Psoas muscle (tissue), 8 donors: ENCODE measurements at regions of chr2 and their contacts with region 1.

Region 1: DNA sequence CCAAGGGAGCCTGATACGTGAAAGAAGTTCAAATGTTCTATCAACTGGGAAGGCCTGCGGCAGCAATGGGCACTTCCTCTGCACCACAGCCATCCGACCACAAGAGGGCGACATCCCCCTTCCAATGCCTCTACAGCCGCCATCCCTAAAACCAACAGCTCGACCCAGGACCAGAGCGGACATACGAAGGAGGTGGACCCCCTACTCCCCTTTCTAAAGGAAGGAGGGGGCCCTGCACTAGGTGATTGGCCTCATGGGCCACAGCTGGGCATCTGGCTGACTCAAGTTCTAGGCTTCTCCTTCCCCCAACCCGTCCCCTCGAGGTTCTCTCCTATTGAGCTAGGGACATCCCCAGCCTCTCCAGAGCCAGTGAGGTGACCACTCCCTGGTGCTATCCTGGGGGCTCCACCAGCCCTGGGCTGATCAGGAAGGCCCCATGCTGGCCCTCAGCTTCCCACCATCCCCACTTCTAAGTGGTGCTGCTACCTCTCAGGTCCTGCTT is 217.2 kb downstream of the TNS1 start:
- DNase-seq: peak; percentile 78 to 88
- ATAC-seq: peak; percentile 64 to 72 (median 69)
- H3K4me3 ChIP-seq: no peak overlapping the region
- H3K27ac ChIP-seq: no peak overlapping the region
- H3K4me1 ChIP-seq: peaks cover 16% of the 10 kb centered on the region
- H3K27me3 ChIP-seq: no peaks in the 10 kb centered on the region
- CTCF ChIP-seq: peak; percentile 95

Region 2: DNA sequence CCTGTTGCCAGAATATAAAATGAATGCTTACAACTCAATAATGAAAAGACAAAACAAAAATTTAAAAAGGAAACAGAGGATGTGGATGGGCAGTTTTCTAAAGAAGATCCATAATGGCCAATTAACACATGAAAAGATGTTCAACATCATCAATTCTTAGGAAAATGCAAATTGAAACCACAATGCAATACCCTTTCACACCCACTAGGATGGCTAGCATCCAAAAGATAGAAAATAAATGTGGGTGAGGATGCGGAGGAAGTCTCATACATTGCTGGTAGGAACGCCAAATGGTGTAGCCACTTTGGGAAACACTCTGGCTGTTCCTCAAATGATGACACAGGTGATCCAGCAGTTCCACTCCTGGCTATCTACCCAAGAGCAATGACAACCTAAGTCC is 86.7 kb after region 1 on chr2:
- intact Hi-C with region 1: loop called in 1 of 2 experiments (anchors 5 kb)
- DNase-seq: no peak
- ATAC-seq: no peak
- H3K4me3 ChIP-seq: no peak overlapping the region
- H3K27ac ChIP-seq: peak overlapping the region; percentile 75
- H3K4me1 ChIP-seq: peaks cover 46% of the 10 kb centered on the region
- H3K27me3 ChIP-seq: no peaks in the 10 kb centered on the region
- CTCF ChIP-seq: no peak

Region 3: GRCh38 chr2:217886720-217887309 is 101.2 kb after region 1 on chr2:
- intact Hi-C with region 1: loop called (anchors 1 to 2 kb)
- DNase-seq: peak; percentile 82 to 89
- ATAC-seq: peak; percentile 48 to 74 (median 63)
- H3K4me3 ChIP-seq: no peak overlapping the region
- H3K27ac ChIP-seq: no peak overlapping the region
- H3K4me1 ChIP-seq: peaks cover 28% of the 10 kb centered on the region
- H3K27me3 ChIP-seq: no peaks in the 10 kb centered on the region
- CTCF ChIP-seq: peak; percentile 85

Region 4: GRCh38 chr2:217988014-217988839 is 202.6 kb after region 1 on chr2:
- intact Hi-C with region 1: loop called (anchors 1 to 2 kb)
- DNase-seq: peak; percentile 84 to 93
- ATAC-seq: peak; percentile 81 to 87 (median 84)
- H3K4me3 ChIP-seq: peak overlapping the region; percentile 38
- H3K27ac ChIP-seq: peak overlapping the region; percentile 73
- H3K4me1 ChIP-seq: peaks cover 17% of the 10 kb centered on the region
- H3K27me3 ChIP-seq: no peaks in the 10 kb centered on the region
- CTCF ChIP-seq: peak; percentile 89

Region 5: GRCh38 chr2:217993817-217994463 is 208.3 kb after region 1 on chr2:
- intact Hi-C with region 1: loop called (anchors 1 to 2 kb)
- DNase-seq: peak; percentile 75 to 88
- ATAC-seq: peak; percentile 64 to 76 (median 70)
- H3K4me3 ChIP-seq: no peak overlapping the region
- H3K27ac ChIP-seq: peak overlapping the region; percentile 50
- H3K4me1 ChIP-seq: peaks cover 27% of the 10 kb centered on the region
- H3K27me3 ChIP-seq: no peaks in the 10 kb centered on the region
- CTCF ChIP-seq: peak; percentile 71

Region 6: GRCh38 chr2:218033590-218034496 is 248.2 kb after region 1 on chr2:
- intact Hi-C with region 1: loop called in 1 of 2 experiments (anchors 2 kb)
- DNase-seq: peak in 1 of 2 donors; percentile 54
- ATAC-seq: no peak
- H3K4me3 ChIP-seq: no peak overlapping the region
- H3K27ac ChIP-seq: no peak overlapping the region
- H3K4me1 ChIP-seq: peaks cover 16% of the 10 kb centered on the region
- H3K27me3 ChIP-seq: no peaks in the 10 kb centered on the region
- CTCF ChIP-seq: no peak

Region 7: DNA sequence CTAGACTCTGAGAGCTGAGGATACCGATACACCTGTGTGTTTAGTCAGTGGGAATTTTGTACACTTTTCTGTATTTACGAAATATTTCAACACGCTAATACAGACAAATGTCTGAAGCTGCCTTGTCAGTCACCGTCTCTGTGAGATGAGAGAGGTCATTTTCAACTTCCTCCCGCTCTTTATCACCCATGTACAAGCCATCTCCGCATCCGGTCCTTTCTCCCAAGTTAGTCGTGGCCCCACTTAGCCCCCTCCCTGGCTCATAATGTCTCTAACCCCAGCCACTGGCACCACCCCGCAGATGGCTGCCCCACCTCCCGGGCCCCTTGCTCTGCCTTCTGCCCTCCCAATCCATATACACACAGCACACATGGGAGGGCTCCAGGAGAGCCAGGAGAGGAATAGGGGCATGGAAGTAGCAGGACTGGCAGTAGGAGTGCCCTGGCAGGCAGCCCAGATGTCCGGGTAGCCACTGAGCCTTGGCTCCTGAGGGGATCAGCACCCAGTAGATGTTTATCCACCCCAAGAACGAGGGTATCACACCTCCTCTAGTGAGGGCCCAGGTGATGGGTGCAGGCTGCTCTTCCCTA is 281.4 kb after region 1 on chr2:
- intact Hi-C with region 1: loop called (anchors 1 to 5 kb)
- DNase-seq: no peak
- ATAC-seq: no peak
- H3K4me3 ChIP-seq: no peak overlapping the region
- H3K27ac ChIP-seq: no peak overlapping the region
- H3K4me1 ChIP-seq: no peaks in the 10 kb centered on the region
- H3K27me3 ChIP-seq: peaks cover 0 to 5% (median 3%) of the 10 kb centered on the region in 3 donors
- CTCF ChIP-seq: no peak